CD4-positive, alpha-beta memory T cell (primary cell): ENCODE measurements at regions of chrX and their contacts with region 1.

Region 1: DNA sequence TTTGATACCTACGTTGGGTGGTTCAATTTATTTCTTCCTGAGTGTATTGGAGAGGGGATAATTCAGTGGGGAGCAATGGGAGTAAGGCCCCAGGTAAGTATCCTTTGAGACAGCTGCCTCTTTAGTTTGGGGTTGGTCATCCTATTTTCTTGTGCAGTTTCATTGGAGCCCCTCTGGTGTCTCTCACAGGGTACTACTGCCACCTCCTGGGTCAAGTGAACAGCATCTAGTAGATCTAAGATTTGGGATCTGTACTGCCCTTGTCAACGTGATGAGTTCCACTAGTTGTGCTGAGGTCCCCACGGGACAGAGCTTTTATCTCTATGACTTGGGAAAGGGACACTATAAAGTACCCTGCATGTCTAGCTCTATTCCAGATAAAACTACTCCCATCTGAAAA is 80.6 kb downstream of the PBDC1 start:
- DNase-seq: peak; percentile 32 to 45 (median 41)
- H3K4me3 ChIP-seq: no peak overlapping the region
- H3K4me3 Mint-ChIP-seq: no peak overlapping the region
- H3K27ac ChIP-seq: no peak overlapping the region
- H3K27ac Mint-ChIP-seq: peak overlapping the region in 1 of 7 donors; percentile 4
- H3K4me1 ChIP-seq: no peaks in the 10 kb centered on the region
- H3K4me1 Mint-ChIP-seq: peaks cover 0 to 1% (median 0%) of the 10 kb centered on the region in 4 donors
- H3K27me3 ChIP-seq: no peaks in the 10 kb centered on the region
- H3K27me3 Mint-ChIP-seq: no peaks in the 10 kb centered on the region

Region 2: DNA sequence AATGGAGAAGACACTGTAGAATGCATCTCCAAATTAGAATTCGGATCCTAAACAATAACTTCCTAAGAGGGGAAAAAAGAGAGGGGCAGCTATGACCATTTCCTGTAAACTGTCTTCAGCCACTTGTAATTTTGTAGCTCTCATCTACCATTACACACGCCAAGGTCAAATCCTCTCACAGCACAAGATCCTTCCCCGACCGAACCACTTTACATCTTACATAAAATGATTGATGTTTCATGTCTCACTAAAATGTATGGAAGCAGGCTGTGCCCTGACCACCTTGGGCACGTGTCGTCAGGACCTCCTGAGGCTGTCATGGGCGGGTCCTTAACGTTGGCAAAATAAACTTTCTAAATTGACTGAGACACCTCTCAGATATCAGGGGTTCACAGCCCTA is 104.7 kb before region 1 on chrX:
- CTCF ChIA-PET with region 1: interaction called, 15 read pairs
- POLR2A ChIA-PET with region 1: no interaction called
- intact Hi-C with region 1: loop called (anchors 5 kb)
- DNase-seq: peak; percentile 60 to 74 (median 69)
- H3K4me3 ChIP-seq: peak overlapping the region; percentile 6 to 32
- H3K4me3 Mint-ChIP-seq: peak overlapping the region; percentile 73 to 92 (median 82)
- H3K27ac ChIP-seq: peak overlapping the region; percentile 67
- H3K27ac Mint-ChIP-seq: peak overlapping the region; percentile 89 to 99 (median 97)
- H3K4me1 ChIP-seq: peaks cover 25% of the 10 kb centered on the region
- H3K4me1 Mint-ChIP-seq: peaks cover 10 to 27% (median 20%) of the 10 kb centered on the region in 4 donors
- H3K27me3 ChIP-seq: no peaks in the 10 kb centered on the region
- H3K27me3 Mint-ChIP-seq: no peaks in the 10 kb centered on the region

Region 3: DNA sequence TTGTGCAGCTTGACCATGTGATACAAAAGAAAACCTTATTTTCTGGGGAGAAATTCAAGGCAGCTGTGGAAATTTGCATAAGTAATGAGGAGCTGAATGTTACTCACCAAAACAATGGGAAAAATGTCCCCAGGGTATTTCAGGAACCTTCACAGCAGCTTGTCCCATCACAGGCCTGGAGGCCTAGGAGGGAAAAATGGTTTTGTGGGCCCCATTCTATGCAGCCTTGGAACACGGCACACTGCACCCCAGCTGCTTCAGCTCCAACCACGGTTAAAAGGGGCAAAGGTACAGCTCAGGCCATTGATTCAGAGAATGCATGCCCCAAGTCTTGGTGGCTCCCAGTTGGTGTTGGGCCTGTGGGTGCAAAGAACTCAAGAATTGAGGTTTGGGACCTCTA is 390.2 kb after region 1 on chrX:
- CTCF ChIA-PET with region 1: no interaction called
- POLR2A ChIA-PET with region 1: no interaction called
- intact Hi-C with region 1: no loop called
- DNase-seq: no peak
- H3K4me3 ChIP-seq: no peak overlapping the region
- H3K4me3 Mint-ChIP-seq: no peak overlapping the region
- H3K27ac ChIP-seq: no peak overlapping the region
- H3K27ac Mint-ChIP-seq: no peak overlapping the region
- H3K4me1 ChIP-seq: no peaks in the 10 kb centered on the region
- H3K4me1 Mint-ChIP-seq: no peaks in the 10 kb centered on the region
- H3K27me3 ChIP-seq: no peaks in the 10 kb centered on the region
- H3K27me3 Mint-ChIP-seq: no peaks in the 10 kb centered on the region